ENCODE measurements at regions of chr12 and their contacts with region 1.

Region 1: DNA sequence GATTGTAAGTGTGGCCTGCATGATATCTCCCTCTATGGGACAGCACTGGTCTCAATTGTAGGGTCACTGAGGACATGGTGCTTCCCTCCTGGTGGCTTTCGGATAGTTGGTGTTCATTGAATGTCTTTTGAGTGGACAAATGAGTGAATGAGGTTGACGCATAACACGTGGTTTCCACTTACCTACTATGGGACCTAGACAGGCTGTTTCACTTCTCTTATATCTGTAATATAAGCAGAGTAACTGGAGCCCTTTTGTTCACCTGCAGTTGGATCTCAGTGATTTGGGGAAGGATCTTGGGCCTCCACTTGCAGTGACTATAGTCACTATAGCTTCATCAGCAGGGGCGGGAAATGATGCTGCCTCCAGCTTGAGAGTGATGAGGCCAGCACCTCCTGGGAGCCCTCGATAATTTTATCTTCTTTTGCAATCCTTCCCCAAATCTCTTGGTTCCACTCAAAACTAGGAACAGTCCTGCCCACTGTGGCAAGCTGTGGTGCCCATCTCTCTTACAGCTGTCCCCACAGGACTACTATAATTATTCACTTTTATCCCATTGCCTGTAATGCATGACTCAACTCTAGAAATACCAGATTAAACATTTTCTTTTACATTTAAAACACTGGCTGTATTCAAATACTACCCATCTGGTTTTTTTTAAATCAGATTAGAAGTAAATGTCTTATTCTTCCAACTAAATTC is 242.9 kb downstream of the CHST11 start:
- DNase-seq: no peak
- ATAC-seq: no peak
- H3K4me3 ChIP-seq: no peak overlapping the region
- H3K27ac ChIP-seq: no peak overlapping the region
- H3K4me1 ChIP-seq: 0 out of 2 replicates have a peak, but pooled peaks cover 4% of the 10 kb centered on the region
- H3K27me3 ChIP-seq: no peaks in the 10 kb centered on the region
- CTCF ChIP-seq: no peak

Region 2: GRCh38 chr12:104763168-104763805 is 63.6 kb after region 1 on chr12:
- CTCF ChIA-PET with region 1: no interaction called
- POLR2A ChIA-PET with region 1: no interaction called
- intact Hi-C with region 1: loop called (anchors 10 kb)
- DNase-seq: peak; percentile 88
- ATAC-seq: peak; percentile 89
- H3K4me3 ChIP-seq: no peak overlapping the region
- H3K27ac ChIP-seq: peak overlapping the region; percentile 14; the same call in 1 of the 2 replicates
- H3K4me1 ChIP-seq: peaks cover 20% of the 10 kb centered on the region
- H3K27me3 ChIP-seq: no peaks in the 10 kb centered on the region
- CTCF ChIP-seq: no peak